Calu3 (cell line): ENCODE measurements at regions of chr1 and their contacts with region 1.

Region 1: DNA sequence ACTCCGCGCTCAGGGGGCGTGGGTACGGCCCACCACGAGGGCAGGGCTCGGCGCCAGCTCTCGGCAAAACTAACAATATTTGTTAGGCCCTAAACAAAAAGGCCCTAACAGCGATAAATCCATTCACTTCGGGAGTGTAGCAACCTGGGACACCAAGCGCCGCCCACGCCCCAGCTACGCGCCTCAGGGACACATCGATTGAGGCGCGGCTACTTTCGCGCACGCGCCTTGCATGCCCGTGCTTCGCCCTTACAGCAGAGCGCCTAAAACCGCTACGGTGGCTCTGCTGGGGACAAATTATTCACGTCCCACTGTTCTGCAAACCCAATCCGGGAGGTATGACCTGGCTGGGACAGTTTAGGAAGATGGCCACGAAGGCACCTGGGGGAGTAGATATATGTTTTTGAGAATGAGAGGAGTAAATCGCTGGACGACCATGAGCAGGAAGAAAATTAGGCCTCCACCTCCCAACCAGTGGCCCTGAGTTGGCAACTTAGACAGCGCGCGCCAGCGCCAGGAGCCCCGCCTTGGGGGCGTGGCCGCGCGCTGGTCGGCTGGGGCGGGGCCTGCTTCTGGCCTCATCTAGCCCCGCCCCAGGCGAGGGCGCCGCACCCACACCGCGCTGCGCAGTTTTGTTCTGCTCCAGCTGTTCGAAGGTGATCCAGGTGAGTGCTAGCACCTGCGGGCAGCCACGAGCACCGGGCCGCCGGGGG is at the start of gene MGST3:
- DNase-seq: peak; percentile 96
- H3K4me3 Mint-ChIP-seq: no peak within 1 kb of the TSS
- H3K27ac Mint-ChIP-seq: no peak within 1 kb of the TSS
- H3K4me1 Mint-ChIP-seq: no peaks in the 10 kb centered on the region
- H3K27me3 Mint-ChIP-seq: no peaks in the 10 kb centered on the region
- CTCF ChIP-seq: no peak
- total RNA-seq, gene MGST3: 136 and 139 TPM in 2 replicates

Region 2: DNA sequence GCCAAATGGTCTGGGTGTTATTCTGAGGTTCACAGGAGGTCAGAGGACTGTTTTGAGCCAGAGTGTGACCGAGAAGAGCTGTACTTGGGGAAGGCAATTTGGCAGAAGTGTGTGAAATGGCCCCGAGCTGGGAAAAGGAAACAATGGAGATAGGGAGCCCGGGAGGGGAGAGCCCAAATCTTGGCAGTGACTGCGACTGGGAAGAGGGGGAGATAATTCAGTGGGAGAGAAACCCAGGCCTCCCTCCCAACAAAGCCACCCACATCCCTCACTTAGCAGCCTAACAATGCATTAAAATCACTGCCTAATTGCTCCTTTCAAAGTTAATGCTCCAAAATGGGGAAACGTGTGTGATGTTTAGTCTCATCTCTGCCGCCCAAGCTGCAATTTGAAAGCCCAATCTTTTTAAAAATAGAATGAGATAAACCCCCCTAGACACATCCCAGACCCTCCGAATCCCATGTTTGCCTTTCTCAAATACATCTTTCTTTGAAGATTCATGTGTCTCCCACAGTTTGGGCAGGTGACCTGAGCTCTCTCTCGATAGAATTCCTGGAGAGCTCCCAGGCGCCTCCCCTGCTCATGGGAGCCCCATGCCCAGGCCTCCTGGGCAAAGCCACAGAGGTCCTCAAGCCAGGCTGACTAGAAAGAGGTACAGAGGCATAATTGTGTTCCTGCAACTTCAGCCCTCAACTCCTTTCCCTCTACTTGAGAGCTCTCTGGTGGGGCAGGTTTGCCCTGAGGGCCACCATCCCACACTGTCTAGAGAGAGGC is 69.7 kb before region 1 on chr1:
- CTCF ChIA-PET with region 1: no interaction called
- intact Hi-C with region 1: no loop called
- DNase-seq: no peak
- H3K4me3 Mint-ChIP-seq: no peak overlapping the region
- H3K27ac Mint-ChIP-seq: no peak overlapping the region
- H3K4me1 Mint-ChIP-seq: no peaks in the 10 kb centered on the region
- H3K27me3 Mint-ChIP-seq: peaks cover 62% of the 10 kb centered on the region
- CTCF ChIP-seq: no peak

Region 3: GRCh38 chr1:165666152-165666825 is 35.5 kb after region 1 on chr1:
- CTCF ChIA-PET with region 1: no interaction called
- intact Hi-C with region 1: no loop called
- DNase-seq: no peak
- H3K4me3 Mint-ChIP-seq: no peak overlapping the region
- H3K27ac Mint-ChIP-seq: no peak overlapping the region
- H3K4me1 Mint-ChIP-seq: no peaks in the 10 kb centered on the region
- H3K27me3 Mint-ChIP-seq: no peaks in the 10 kb centered on the region
- CTCF ChIP-seq: no peak

Region 4: DNA sequence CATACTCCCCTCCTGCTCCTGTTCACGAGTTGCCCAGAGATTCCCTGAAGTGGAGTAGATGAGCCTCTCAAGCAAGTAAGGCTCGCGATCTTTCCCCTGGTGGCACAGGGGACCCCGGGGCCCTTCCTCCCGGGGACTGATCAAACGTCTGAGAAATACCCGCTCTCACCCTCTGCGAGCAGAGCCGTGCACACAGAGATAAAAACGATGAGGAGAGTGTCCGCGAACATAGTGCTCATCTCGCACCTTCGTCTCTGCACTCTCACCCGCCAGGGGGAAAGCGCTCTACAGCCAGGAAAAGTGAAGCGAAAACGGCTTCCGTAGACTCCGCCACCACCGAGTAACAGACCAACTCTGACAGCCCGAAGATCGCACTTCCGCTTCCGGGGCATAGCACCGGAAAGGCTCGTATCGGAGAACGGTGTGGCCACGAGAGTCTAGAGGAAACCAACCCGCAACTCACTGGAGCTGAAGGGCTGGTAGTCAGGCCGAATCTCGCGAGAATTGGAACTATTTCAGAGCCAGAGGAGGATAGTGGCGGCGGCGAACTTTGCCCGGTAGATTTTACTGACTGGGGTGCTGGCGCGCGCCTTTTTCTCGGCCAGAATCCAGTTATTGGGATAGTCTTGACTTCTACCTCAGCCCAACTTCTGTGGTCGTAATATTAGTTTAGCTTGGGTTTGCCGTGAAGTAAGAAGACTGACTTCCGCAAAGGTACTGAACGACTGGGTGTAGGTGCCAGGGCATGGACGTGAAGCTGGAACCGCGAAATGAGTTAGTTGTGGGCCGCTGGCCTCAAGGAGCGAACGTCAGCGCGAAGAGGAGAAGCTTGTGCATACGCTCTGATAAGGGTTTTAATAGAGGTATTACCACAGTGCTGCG is 138.0 kb after region 1 on chr1 and contains the start of gene TMCO1:
- CTCF ChIA-PET with region 1: no interaction called
- intact Hi-C with region 1: no loop called
- DNase-seq: peak; percentile 95
- H3K4me3 Mint-ChIP-seq: peak within 1 kb of the TSS; percentile 97
- H3K27ac Mint-ChIP-seq: peak within 1 kb of the TSS; percentile 97
- H3K4me1 Mint-ChIP-seq: peaks cover 45% of the 10 kb centered on the region
- H3K27me3 Mint-ChIP-seq: no peaks in the 10 kb centered on the region
- CTCF ChIP-seq: no peak
- total RNA-seq, gene TMCO1: 145 and 157 TPM in 2 replicates

Region 5: GRCh38 chr1:165842671-165843129 is 211.9 kb after region 1 on chr1:
- CTCF ChIA-PET with region 1: no interaction called
- intact Hi-C with region 1: loop called (anchors 10 kb)
- DNase-seq: peak; percentile 23
- H3K4me3 Mint-ChIP-seq: peak overlapping the region; percentile 9
- H3K27ac Mint-ChIP-seq: peak overlapping the region; percentile 23
- H3K4me1 Mint-ChIP-seq: peaks cover 64% of the 10 kb centered on the region
- H3K27me3 Mint-ChIP-seq: no peaks in the 10 kb centered on the region
- CTCF ChIP-seq: no peak